CD14-positive monocyte (primary cell): ENCODE measurements at regions of chr5 and their contacts with region 1.

Region 1: GRCh38 chr5:317086-317811 is 4.3 kb upstream of the AHRR start:
- DNase-seq: peak in 2 of 3 donors; percentile 30 to 57
- H3K4me3 ChIP-seq: no peak overlapping the region
- H3K4me3 Mint-ChIP-seq: no peak overlapping the region
- H3K27ac ChIP-seq: no peak overlapping the region
- H3K27ac Mint-ChIP-seq: no peak overlapping the region
- H3K4me1 ChIP-seq: peaks cover 2 to 10% of the 10 kb centered on the region in 2 donors
- H3K4me1 Mint-ChIP-seq: peaks cover 5% of the 10 kb centered on the region
- H3K27me3 ChIP-seq: peaks cover 5 to 33% of the 10 kb centered on the region in 2 donors
- H3K27me3 Mint-ChIP-seq: peaks cover 26 to 37% (median 30%) of the 10 kb centered on the region in 3 donors
- CTCF ChIP-seq: no peak

Region 2: GRCh38 chr5:231661-232060 is 85.6 kb before region 1 on chr5:
- intact Hi-C with region 1: no loop called
- DNase-seq: no peak
- H3K4me3 ChIP-seq: no peak overlapping the region
- H3K4me3 Mint-ChIP-seq: no peak overlapping the region
- H3K27ac ChIP-seq: no peak overlapping the region
- H3K27ac Mint-ChIP-seq: peak overlapping the region in 2 of 7 donors; percentile 30 to 37
- H3K4me1 ChIP-seq: no peaks in the 10 kb centered on the region
- H3K4me1 Mint-ChIP-seq: no peaks in the 10 kb centered on the region
- H3K27me3 ChIP-seq: no peaks in the 10 kb centered on the region
- H3K27me3 Mint-ChIP-seq: peaks cover 0 to 3% (median 0%) of the 10 kb centered on the region in 3 donors
- CTCF ChIP-seq: no peak

Region 3: DNA sequence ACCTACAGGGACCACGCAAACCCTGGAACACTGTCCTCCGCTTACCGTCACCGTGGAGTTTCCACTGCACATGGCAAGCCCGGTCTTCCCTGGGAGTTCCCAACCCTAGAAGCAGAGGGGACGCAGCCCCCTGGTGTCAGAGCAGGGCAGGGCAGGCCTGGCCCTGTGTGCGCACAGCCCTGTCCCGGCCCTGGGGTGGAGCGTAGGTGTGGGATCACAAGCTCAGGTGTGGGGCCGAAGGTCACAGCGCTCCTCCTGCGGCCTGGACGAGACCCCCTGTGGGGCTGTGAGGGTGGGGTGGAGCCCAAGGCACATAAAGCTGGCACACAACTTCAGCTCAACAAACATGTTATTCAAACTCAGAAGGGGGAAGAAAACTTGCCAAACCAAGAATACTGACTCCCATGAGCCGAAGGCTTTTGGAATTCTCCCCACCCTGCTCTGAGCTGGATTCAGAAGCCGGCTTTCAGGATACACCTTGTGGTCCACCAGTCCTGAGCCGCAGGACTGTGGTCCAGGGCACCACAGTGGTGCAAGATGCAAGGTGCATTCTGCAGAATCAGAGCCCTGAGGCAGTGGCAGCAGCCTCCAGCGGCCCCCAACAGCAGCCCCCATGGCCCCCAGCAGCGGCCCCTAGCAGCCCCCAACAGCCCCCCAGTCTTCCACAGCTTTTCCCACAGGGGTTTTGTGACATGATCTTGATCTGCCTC is 113.9 kb after region 1 on chr5:
- intact Hi-C with region 1: loop called in 1 of 2 experiments (anchors 2 kb)
- DNase-seq: peak in 2 of 3 donors; percentile 29 to 64
- H3K4me3 ChIP-seq: no peak overlapping the region
- H3K4me3 Mint-ChIP-seq: no peak overlapping the region
- H3K27ac ChIP-seq: no peak overlapping the region
- H3K27ac Mint-ChIP-seq: no peak overlapping the region
- H3K4me1 ChIP-seq: no peaks in the 10 kb centered on the region
- H3K4me1 Mint-ChIP-seq: no peaks in the 10 kb centered on the region
- H3K27me3 ChIP-seq: no peaks in the 10 kb centered on the region
- H3K27me3 Mint-ChIP-seq: peaks cover 12 to 17% (median 13%) of the 10 kb centered on the region in 3 donors
- CTCF ChIP-seq: peak; percentile 28